Activated B cell treated with CpG ODN at 0.5 μM for 24 hours (primary cell): ENCODE measurements at regions of chr5 and their contacts with region 1.

Region 1: DNA sequence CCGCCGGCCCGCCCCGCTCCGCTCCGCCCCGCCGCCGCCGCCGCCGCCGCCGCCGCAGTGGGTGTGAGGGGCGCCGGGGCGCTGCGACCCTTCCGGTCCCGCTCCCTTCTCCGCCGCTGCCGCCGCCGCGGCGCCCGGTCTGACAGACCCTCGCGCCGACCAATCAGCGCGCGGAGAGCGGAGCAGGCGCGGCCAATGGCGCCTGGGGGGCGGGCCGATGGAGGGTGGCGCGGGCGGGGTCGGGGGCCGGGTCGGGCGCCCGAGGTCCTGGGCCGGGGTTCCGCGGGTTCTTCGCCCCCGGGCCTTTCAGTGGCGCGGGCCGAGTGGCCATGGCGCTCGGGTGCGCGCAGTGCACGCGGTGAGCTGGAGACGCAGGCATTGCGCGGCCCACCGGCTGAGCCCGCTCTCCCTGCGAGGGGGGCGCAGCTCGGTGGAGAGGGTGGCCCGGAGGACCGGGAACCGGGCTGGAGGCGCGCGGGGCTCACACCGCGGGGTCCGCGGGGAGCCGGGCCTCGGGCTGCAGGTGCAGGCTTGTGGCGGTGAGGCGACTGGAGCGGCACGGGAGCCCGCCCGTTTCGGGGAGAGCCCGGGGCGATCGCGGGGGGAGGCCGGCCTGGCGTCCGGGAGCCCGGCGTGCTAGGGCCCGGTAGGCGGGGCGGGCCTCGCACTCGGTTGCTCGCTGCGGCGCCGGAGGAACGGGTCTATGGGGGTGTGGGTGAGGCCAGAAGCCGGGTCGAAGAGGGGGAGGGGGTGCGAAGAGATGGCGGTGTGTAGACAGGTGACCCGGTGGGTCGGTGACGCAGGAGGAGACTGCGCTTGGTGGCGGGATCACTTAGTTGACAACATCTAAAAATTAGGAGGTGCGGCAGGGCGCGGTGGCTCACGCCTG is at the start of gene MAPK9:
- DNase-seq: peak; percentile 87
- ATAC-seq: peak; percentile 78
- H3K4me3 Mint-ChIP-seq: peak within 1 kb of the TSS; percentile 92
- H3K27ac Mint-ChIP-seq: peak within 1 kb of the TSS; percentile 89
- H3K4me1 Mint-ChIP-seq: peaks cover 33% of the 10 kb centered on the region
- H3K27me3 Mint-ChIP-seq: no peaks in the 10 kb centered on the region
- CTCF ChIP-seq: no peak
- total RNA-seq, gene MAPK9: 26.9 and 30.3 TPM in 2 replicates

Region 2: DNA sequence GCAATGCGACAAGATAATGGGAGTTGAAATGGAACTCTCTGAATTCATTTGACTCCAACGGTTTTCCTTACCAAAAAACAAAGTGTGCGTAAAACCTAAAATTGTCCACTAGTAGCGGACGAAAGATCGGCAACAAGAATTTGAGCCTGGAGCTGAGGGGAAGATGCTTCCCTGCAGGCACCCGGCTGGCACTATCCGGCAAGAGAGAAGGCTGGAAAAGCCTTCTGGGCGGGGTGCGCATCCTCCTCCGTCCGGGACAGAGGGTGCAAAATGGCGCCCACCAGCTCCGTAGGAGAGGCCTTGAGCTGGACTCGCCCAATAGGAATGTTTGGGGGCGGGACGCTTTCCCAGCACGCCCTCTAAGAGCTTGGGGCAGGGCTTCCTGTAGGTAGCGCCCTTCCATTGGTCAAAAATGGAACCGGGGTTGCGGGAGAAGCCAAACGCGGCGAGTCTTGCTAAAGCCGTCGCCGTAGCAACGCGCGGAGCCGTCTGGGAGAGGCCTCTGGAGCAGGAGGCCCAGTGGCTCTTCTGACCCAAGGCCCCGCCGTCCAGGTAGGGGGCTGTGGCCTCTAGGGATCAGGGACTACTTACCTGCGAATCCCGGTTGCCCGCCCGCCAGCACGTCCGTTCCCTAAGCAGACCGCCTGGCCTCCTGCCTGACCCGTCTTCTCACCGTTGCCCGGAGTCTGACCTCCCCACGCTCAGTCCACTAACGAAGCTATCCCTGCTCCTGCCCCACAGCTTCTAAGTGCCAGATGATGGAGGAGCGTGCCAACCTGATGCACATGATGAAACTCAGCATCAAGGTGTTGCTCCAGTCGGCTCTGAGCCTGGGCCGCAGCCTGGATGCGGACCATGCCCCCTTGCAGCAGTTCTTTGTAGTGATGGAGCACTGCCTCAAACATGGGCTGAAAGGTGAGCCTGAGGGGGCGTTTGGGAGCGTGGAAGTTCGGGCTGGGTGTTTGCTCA is 732.6 kb before region 1 on chr5:
- CTCF ChIA-PET with region 1: no interaction called
- POLR2A ChIA-PET with region 1: no interaction called
- intact Hi-C with region 1: loop called (anchors 10 kb)
- DNase-seq: peak; percentile 64
- ATAC-seq: peak; percentile 100
- H3K4me3 Mint-ChIP-seq: peak overlapping the region; percentile 86
- H3K27ac Mint-ChIP-seq: peak overlapping the region; percentile 84
- H3K4me1 Mint-ChIP-seq: peaks cover 17% of the 10 kb centered on the region
- H3K27me3 Mint-ChIP-seq: no peaks in the 10 kb centered on the region
- CTCF ChIP-seq: no peak

Region 3: DNA sequence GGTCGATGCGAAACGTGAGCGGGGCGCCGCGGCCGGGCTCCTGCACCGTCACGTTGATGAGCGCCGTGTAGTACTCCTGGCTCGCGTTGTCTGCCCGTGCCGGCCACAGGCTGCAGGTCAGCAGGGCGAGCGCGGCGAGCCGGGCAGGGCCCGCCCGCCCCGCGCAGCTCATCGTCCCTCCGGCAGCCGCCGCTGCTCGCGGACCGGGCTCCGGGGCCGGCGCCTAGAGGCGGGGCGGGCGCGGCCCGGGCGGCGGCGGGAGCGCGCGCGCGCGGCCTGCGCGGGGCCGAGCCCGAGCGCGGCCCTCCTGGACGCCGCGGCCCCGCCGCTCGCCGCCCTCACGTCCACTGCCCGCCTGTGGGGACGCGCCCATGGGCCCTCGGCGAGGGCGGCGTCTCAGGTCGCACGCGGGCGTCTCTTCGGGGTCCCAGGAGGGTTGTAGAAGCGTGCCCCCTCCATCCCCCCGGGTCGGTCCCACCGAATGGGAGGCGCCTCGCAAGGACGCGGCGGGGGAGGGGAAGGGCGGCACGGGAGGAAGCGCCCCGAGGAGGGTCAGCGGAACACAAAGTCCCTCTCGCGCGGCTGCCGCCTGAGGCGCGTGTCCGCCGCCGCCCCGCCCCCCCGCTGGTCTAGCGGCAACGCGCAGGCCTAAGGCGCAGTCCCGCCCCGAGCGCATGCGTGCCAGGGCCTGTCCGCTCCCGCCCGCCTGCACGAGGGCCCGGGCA is 220.5 kb before region 1 on chr5 and contains the start of gene RNF130:
- CTCF ChIA-PET with region 1: no interaction called
- POLR2A ChIA-PET with region 1: no interaction called
- intact Hi-C with region 1: loop called (anchors 5 kb)
- DNase-seq: peak; percentile 91
- ATAC-seq: peak; percentile 83
- H3K4me3 Mint-ChIP-seq: peak within 1 kb of the TSS; percentile 89
- H3K27ac Mint-ChIP-seq: peak within 1 kb of the TSS; percentile 84
- H3K4me1 Mint-ChIP-seq: peaks cover 28% of the 10 kb centered on the region
- H3K27me3 Mint-ChIP-seq: peaks cover 2% of the 10 kb centered on the region
- CTCF ChIP-seq: no peak
- total RNA-seq, gene RNF130: 17.6 and 18.5 TPM in 2 replicates

Region 4: GRCh38 chr5:180230017-180230416 is 62.2 kb before region 1 on chr5:
- CTCF ChIA-PET with region 1: no interaction called
- POLR2A ChIA-PET with region 1: no interaction called
- intact Hi-C with region 1: no loop called
- DNase-seq: no peak
- ATAC-seq: no peak
- H3K4me3 Mint-ChIP-seq: no peak overlapping the region
- H3K27ac Mint-ChIP-seq: no peak overlapping the region
- H3K4me1 Mint-ChIP-seq: no peaks in the 10 kb centered on the region
- H3K27me3 Mint-ChIP-seq: no peaks in the 10 kb centered on the region
- CTCF ChIP-seq: no peak

Region 5: GRCh38 chr5:180328296-180329137 is 36.3 kb after region 1 on chr5:
- CTCF ChIA-PET with region 1: interaction called, 39 read pairs
- POLR2A ChIA-PET with region 1: interaction called, 4 read pairs
- intact Hi-C with region 1: loop called (anchors 1 kb)
- DNase-seq: peak; percentile 70
- ATAC-seq: peak; percentile 75
- H3K4me3 Mint-ChIP-seq: no peak overlapping the region
- H3K27ac Mint-ChIP-seq: no peak overlapping the region
- H3K4me1 Mint-ChIP-seq: no peaks in the 10 kb centered on the region
- H3K27me3 Mint-ChIP-seq: peaks cover 12% of the 10 kb centered on the region
- CTCF ChIP-seq: no peak

Region 6: DNA sequence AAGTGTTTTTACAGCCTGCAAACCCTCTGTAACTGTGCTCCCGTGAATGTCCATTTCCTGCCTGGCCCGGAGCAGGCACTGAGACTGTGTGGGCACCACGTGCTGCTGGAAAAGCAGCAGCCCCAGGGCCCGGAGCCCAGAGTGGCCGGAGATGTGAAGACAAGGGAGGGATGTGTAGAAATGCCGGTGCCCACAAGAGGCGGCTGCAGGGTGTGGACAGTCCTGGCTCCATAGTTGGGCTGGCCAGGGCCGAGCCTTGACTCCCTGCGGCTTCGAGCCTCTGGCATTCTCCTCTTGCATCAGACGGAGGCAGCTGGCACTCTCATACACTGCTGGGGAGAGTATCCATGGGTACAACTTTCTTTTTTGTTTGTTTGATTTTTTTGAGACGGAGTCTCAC is 74.1 kb after region 1 on chr5:
- CTCF ChIA-PET with region 1: no interaction called
- POLR2A ChIA-PET with region 1: no interaction called
- intact Hi-C with region 1: no loop called
- DNase-seq: no peak
- ATAC-seq: no peak
- H3K4me3 Mint-ChIP-seq: no peak overlapping the region
- H3K27ac Mint-ChIP-seq: no peak overlapping the region
- H3K4me1 Mint-ChIP-seq: no peaks in the 10 kb centered on the region
- H3K27me3 Mint-ChIP-seq: peaks cover 2% of the 10 kb centered on the region
- CTCF ChIP-seq: no peak

Region 7: GRCh38 chr5:180470966-180471582 is 178.9 kb after region 1 on chr5:
- CTCF ChIA-PET with region 1: interaction called, 20 read pairs
- POLR2A ChIA-PET with region 1: no interaction called
- intact Hi-C with region 1: loop called (anchors 1 kb)
- DNase-seq: peak; percentile 36
- ATAC-seq: peak; percentile 77
- H3K4me3 Mint-ChIP-seq: no peak overlapping the region
- H3K27ac Mint-ChIP-seq: no peak overlapping the region
- H3K4me1 Mint-ChIP-seq: no peaks in the 10 kb centered on the region
- H3K27me3 Mint-ChIP-seq: peaks cover 10% of the 10 kb centered on the region
- CTCF ChIP-seq: peak; percentile 55

Region 8: GRCh38 chr5:180605554-180606214 is 313.5 kb after region 1 on chr5:
- CTCF ChIA-PET with region 1: no interaction called
- POLR2A ChIA-PET with region 1: no interaction called
- intact Hi-C with region 1: loop called (anchors 2 kb)
- DNase-seq: no peak
- ATAC-seq: no peak
- H3K4me3 Mint-ChIP-seq: no peak overlapping the region
- H3K27ac Mint-ChIP-seq: no peak overlapping the region
- H3K4me1 Mint-ChIP-seq: no peaks in the 10 kb centered on the region
- H3K27me3 Mint-ChIP-seq: no peaks in the 10 kb centered on the region
- CTCF ChIP-seq: no peak